Activated CD4-positive, alpha-beta T cell treated with anti-CD3 and anti-CD28 coated beads, Interleukin-2, amount 10 ng/mL, durations not matched to agents 24 days and 14 days (primary cell): ENCODE measurements at regions of chr13 and their contacts with region 1.

Region 1: GRCh38 chr13:37029617-37030016 is 29.0 kb downstream of the EXOSC8 start:
- DNase-seq: no peak
- H3K4me3 Mint-ChIP-seq: no peak overlapping the region
- H3K27ac Mint-ChIP-seq: no peak overlapping the region
- H3K4me1 Mint-ChIP-seq: no peaks in the 10 kb centered on the region
- H3K27me3 Mint-ChIP-seq: no peaks in the 10 kb centered on the region

Region 2: GRCh38 chr13:36789061-36789460 is 240.6 kb before region 1 on chr13:
- intact Hi-C with region 1: no loop called
- DNase-seq: no peak
- H3K4me3 Mint-ChIP-seq: no peak overlapping the region
- H3K27ac Mint-ChIP-seq: no peak overlapping the region
- H3K4me1 Mint-ChIP-seq: peaks cover 2% of the 10 kb centered on the region
- H3K27me3 Mint-ChIP-seq: peaks cover 6% of the 10 kb centered on the region

Region 3: GRCh38 chr13:37011002-37011401 is 18.6 kb before region 1 on chr13:
- intact Hi-C with region 1: loop called (anchors 2 kb)
- DNase-seq: no peak
- H3K4me3 Mint-ChIP-seq: no peak overlapping the region
- H3K27ac Mint-ChIP-seq: no peak overlapping the region
- H3K4me1 Mint-ChIP-seq: peaks cover 8% of the 10 kb centered on the region
- H3K27me3 Mint-ChIP-seq: no peaks in the 10 kb centered on the region

Region 4: DNA sequence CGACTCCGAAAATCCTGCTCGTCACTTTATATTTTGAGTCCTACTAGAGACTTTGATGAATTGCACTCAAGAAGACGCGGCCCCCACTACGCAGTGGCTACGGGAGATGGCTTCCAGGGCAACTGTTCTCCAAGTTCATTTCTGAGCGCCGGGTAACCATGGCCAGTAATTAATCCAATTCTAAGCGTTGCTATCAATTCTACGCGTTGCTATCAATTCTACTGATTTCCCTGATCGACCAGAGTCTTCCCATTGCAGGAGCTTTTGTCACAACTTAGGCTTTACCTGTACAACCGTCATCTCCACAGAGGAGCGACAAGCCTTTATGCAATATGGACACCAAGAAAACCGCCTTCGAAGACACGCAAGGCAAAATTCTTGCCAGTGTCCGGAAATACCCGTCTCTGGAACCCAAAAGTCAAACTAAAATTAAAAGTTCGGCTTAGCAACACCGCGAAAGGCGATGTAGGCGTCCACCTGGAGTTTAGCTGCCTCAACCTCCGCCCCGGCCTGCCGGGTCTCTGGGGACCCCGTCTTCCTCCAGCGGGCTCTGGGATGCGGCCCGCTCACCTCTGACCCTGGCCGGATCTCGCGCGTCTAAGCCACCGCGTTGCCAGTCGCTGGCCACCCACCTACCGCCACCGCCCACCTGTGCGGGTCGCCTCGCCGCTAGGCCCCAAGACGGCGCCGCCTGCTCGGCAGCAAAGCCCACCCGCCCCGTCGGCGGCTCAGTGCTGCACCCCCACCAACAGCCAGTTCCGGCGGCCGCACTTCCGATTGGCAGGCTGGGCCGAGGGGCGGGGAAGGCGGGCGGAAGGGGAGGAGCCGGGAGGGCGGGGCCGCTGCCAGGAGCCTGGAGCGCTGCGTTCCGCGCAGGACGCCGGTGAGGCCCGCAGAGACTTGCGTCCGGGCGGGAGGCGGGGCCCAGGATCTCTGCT is 29.6 kb after region 1 on chr13 and contains the start of gene SUPT20H:
- intact Hi-C with region 1: loop called (anchors 2 kb)
- DNase-seq: peak; percentile 97
- H3K4me3 Mint-ChIP-seq: peak within 1 kb of the TSS; percentile 87
- H3K27ac Mint-ChIP-seq: peak within 1 kb of the TSS; percentile 97
- H3K4me1 Mint-ChIP-seq: peaks cover 20% of the 10 kb centered on the region
- H3K27me3 Mint-ChIP-seq: peaks cover 9% of the 10 kb centered on the region
- total RNA-seq, gene SUPT20H: 67.4 and 74.8 TPM in 2 replicates